ENCODE measurements at regions of chr19 and their contacts with region 1.

Region 1: GRCh38 chr19:16659831-16660708 is at the start of gene SMIM7:
- DNase-seq: peak; percentile 99
- ATAC-seq: peak; percentile 99
- H3K4me3 Mint-ChIP-seq: peak within 1 kb of the TSS; percentile 99
- H3K27ac Mint-ChIP-seq: peak within 1 kb of the TSS; percentile 94
- H3K4me1 Mint-ChIP-seq: peaks cover 34% of the 10 kb centered on the region
- H3K27me3 Mint-ChIP-seq: peaks cover 4% of the 10 kb centered on the region
- total RNA-seq, gene SMIM7: 46.5 to 52.2 TPM

Region 2: DNA sequence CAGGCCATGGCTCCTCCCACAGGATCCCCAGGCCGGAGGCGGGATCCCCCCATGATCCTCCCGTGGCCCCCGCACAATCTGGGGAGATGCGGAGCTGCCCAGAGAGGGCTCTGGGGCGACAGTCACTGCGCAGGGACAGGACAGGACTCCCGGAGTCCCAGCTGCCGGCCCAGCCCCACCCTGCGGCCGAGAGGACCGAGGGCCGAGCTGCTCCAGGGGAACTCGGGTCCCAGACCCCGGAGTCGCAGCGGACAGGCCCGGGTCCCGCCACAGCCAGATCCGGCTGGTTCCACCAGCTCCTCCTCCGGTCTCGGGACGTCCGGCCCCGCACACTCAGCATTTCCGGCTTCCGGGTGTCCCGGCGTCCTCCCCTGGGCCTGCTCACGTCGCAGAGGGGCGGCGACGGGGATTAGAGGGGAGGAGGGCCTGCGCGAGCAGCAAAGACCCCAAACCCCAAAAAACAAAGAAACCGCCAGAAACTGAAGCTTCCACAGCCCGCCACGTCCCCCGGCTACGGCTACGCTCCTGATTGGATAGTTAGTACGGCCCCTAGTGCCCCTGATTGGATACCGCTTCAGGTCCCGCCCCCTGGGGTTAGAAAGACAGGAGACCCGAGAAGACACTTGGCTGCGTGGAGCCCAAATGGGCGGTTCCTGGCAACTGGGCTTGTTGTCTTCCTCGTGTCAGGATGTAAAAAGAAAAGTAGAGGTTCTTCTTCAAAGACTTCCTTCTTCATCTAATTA is 823.3 kb before region 1 on chr19:
- CTCF ChIA-PET with region 1: no interaction called
- POLR2A ChIA-PET with region 1: no interaction called
- intact Hi-C with region 1: loop called in 1 of 2 experiments (anchors 2 kb)
- DNase-seq: peak; percentile 96
- ATAC-seq: peak; percentile 96
- H3K4me3 Mint-ChIP-seq: peak overlapping the region; percentile 85
- H3K27ac Mint-ChIP-seq: peak overlapping the region; percentile 98
- H3K4me1 Mint-ChIP-seq: peaks cover 15% of the 10 kb centered on the region
- H3K27me3 Mint-ChIP-seq: no peaks in the 10 kb centered on the region

Region 3: GRCh38 chr19:16330368-16330801 is 329.7 kb before region 1 on chr19:
- CTCF ChIA-PET with region 1: no interaction called
- POLR2A ChIA-PET with region 1: no interaction called
- intact Hi-C with region 1: loop called in 1 of 2 experiments (anchors 1 kb)
- DNase-seq: peak; percentile 98
- ATAC-seq: peak; percentile 90
- H3K4me3 Mint-ChIP-seq: peak overlapping the region; percentile 33
- H3K27ac Mint-ChIP-seq: peak overlapping the region; percentile 17
- H3K4me1 Mint-ChIP-seq: peaks cover 62% of the 10 kb centered on the region
- H3K27me3 Mint-ChIP-seq: peaks cover 28% of the 10 kb centered on the region

Region 4: GRCh38 chr19:16495982-16496612 is 164.0 kb before region 1 on chr19 and contains the starts of genes C19orf44 and CALR3:
- CTCF ChIA-PET with region 1: no interaction called
- POLR2A ChIA-PET with region 1: no interaction called
- intact Hi-C with region 1: loop called in 1 of 2 experiments (anchors 1 kb)
- DNase-seq: peak; percentile 99
- ATAC-seq: peak; percentile 99
- H3K4me3 Mint-ChIP-seq: peak within 1 kb of the TSS; percentile 89
- H3K27ac Mint-ChIP-seq: peak within 1 kb of the TSS; percentile 79
- H3K4me1 Mint-ChIP-seq: peaks cover 13% of the 10 kb centered on the region
- H3K27me3 Mint-ChIP-seq: no peaks in the 10 kb centered on the region
- total RNA-seq, gene C19orf44: 2.9 to 4.0 TPM
- total RNA-seq, gene CALR3: not detected

Region 5: DNA sequence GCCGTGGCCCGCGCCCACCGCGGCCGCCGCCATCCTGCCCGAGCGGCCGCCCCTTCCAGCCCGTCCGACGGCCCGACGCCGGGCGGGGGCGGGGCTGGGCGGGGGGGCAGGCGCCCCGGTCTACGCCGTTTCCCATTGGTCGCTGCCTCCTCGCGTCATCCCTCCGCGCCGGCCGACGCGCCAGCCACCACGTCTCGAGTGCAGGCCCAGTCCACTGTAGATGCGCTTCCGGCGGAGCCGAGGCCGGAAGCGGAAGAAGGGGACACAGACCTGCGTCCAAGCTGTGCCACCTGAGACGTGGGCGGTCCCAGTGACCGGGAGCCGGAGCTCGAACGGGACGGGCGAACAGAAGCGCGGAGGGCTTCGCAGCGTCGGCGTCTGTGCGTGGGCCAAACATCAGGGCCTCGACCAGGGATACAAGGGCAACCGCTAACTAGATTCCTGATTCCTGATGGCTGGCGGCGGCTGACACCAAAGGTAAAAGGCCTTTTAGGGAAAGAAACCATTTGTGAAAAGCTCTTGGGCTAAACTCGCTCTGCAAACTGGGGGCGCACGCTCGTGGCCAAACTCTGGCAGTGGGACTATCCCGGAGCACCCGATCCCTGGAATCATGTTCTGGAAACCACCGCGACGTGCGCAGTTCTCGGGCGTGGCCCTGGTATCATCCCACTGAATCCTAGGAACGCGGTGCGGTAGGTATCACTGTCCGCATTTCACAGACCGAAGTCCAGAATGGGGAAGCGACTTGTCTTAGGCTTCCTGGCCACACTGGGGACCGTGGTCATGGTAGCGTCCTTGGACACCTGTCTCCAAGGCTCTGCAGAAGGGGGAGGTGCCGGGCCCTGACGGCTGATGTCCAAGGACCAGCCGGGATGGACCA is 87.5 kb before region 1 on chr19 and contains the start of gene SLC35E1:
- CTCF ChIA-PET with region 1: no interaction called
- POLR2A ChIA-PET with region 1: no interaction called
- intact Hi-C with region 1: loop called in 1 of 2 experiments (anchors 1 kb)
- DNase-seq: peak; percentile 96
- ATAC-seq: peak; percentile 97
- H3K4me3 Mint-ChIP-seq: peak within 1 kb of the TSS; percentile 96
- H3K27ac Mint-ChIP-seq: peak within 1 kb of the TSS; percentile 96
- H3K4me1 Mint-ChIP-seq: peaks cover 53% of the 10 kb centered on the region
- H3K27me3 Mint-ChIP-seq: no peaks in the 10 kb centered on the region
- total RNA-seq, gene SLC35E1: 51.5 to 72.1 TPM

Region 6: DNA sequence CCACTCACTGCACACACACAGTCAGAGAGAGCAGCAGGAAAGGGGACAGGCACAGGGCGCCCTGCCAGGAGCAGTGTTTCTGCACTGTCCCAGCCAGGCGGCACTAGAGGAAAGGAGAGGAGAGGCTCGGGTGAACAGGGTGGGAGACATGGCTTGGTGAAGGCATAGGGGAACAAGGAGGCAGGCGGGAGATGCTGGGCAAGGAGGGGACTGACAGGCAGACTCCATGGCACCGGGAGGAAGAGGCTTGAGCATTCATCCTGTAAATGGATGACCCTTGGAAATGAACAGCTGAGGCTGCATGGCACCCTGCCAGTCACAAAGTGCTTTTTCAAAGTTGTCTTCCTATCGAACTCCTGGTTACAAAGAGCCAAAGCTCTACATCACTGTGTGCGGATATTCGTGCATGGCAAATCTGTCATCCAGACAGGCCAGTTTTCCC is 54.5 kb before region 1 on chr19:
- CTCF ChIA-PET with region 1: no interaction called
- POLR2A ChIA-PET with region 1: no interaction called
- intact Hi-C with region 1: no loop called
- DNase-seq: no peak
- ATAC-seq: no peak
- H3K4me3 Mint-ChIP-seq: no peak overlapping the region
- H3K27ac Mint-ChIP-seq: no peak overlapping the region
- H3K4me1 Mint-ChIP-seq: peaks cover 27% of the 10 kb centered on the region
- H3K27me3 Mint-ChIP-seq: no peaks in the 10 kb centered on the region

Region 7: GRCh38 chr19:16628183-16628983 is 31.7 kb before region 1 on chr19 and contains the start of gene MED26:
- CTCF ChIA-PET with region 1: interaction called, 6 read pairs
- POLR2A ChIA-PET with region 1: interaction called, 14 read pairs
- intact Hi-C with region 1: loop called (anchors 1 kb)
- DNase-seq: peak; percentile 98
- ATAC-seq: peak; percentile 92
- H3K4me3 Mint-ChIP-seq: peak within 1 kb of the TSS; percentile 87
- H3K27ac Mint-ChIP-seq: peak within 1 kb of the TSS; percentile 100
- H3K4me1 Mint-ChIP-seq: peaks cover 39% of the 10 kb centered on the region
- H3K27me3 Mint-ChIP-seq: no peaks in the 10 kb centered on the region
- total RNA-seq, gene MED26: 13.6 to 14.5 TPM

Region 8: GRCh38 chr19:17114414-17114831 is 454.4 kb after region 1 on chr19:
- CTCF ChIA-PET with region 1: no interaction called
- POLR2A ChIA-PET with region 1: no interaction called
- intact Hi-C with region 1: no loop called
- DNase-seq: no peak
- ATAC-seq: no peak
- H3K4me3 Mint-ChIP-seq: no peak overlapping the region
- H3K27ac Mint-ChIP-seq: no peak overlapping the region
- H3K4me1 Mint-ChIP-seq: peaks cover 10% of the 10 kb centered on the region
- H3K27me3 Mint-ChIP-seq: no peaks in the 10 kb centered on the region

Region 9: DNA sequence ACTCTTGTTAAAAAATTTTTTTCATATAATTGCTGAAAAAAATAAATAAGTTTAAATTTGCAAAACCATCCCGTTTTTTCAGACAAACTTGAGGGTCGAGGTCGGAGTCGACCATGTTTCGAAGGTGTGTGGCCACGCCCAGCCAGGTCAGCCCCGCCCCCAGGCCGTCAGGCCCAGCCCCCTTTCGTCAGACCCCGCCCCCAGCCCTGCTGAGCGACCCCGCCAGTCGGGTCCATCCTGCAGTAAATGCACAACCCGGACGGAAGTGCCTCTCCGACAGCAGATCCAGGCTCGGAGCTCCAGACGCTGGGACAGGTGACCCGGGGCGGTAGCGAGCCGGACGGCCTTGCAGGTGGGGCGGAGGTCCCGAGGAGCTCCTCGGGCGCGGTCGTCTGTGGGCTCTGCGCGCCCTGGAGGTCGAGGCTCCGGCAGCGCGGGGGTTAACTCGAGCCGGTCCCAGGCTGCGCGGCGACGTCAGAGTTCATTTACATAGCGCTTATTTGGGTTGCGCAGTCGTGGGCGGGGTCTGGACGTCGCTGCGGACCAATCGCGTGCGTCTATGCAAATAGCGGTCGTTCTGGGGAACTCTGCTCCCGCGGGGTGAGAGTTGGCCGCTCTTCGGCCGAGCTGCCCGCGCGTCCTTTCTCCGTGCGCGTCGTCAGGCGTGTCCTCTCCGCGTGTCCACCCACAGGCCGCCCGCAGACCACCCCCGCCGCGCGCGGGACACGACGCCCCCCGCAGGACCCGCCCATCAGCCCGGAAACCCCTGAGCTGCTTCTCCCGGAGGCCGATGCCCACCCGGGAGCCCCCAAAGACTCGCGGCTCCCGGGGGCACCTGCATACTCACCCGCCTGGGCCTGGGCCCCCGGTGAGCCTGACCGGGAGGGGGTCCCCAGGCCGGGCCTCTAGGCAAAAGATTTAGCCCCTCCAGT is 566.2 kb after region 1 on chr19 and contains the start of gene OCEL1:
- CTCF ChIA-PET with region 1: no interaction called
- POLR2A ChIA-PET with region 1: no interaction called
- intact Hi-C with region 1: loop called in 1 of 2 experiments (anchors 2 kb)
- DNase-seq: peak; percentile 99
- ATAC-seq: peak; percentile 92
- H3K4me3 Mint-ChIP-seq: peak within 1 kb of the TSS; percentile 80
- H3K27ac Mint-ChIP-seq: peak within 1 kb of the TSS; percentile 93
- H3K4me1 Mint-ChIP-seq: peaks cover 7% of the 10 kb centered on the region
- H3K27me3 Mint-ChIP-seq: no peaks in the 10 kb centered on the region
- total RNA-seq, gene OCEL1: 10.9 to 11.7 TPM

Measured in activated CD4-positive, alpha-beta T cell treated with anti-CD3 and anti-CD28 coated beads for 36 hours (primary cell).